Activated CD4-positive, alpha-beta memory T cell treated with anti-CD3 and anti-CD28 coated beads for 36 hours (primary cell): ENCODE measurements at regions of chr1 and their contacts with region 1.

Region 1: GRCh38 chr1:45359882-45360513 is 19.8 kb upstream of the MUTYH start:
- DNase-seq: peak; percentile 68
- H3K4me3 Mint-ChIP-seq: no peak overlapping the region
- H3K27ac Mint-ChIP-seq: no peak overlapping the region
- H3K4me1 Mint-ChIP-seq: peaks cover 9% of the 10 kb centered on the region
- H3K27me3 Mint-ChIP-seq: no peaks in the 10 kb centered on the region

Region 2: GRCh38 chr1:45339789-45340570 is 20.0 kb before region 1 on chr1 and contains the starts of genes MUTYH and TOE1:
- CTCF ChIA-PET with region 1: interaction called, 7 read pairs
- POLR2A ChIA-PET with region 1: interaction called, 3 read pairs
- intact Hi-C with region 1: loop called (anchors 1 kb)
- DNase-seq: peak; percentile 97
- H3K4me3 Mint-ChIP-seq: peak within 1 kb of the TSS; percentile 93
- H3K27ac Mint-ChIP-seq: peak within 1 kb of the TSS; percentile 98
- H3K4me1 Mint-ChIP-seq: peaks cover 34% of the 10 kb centered on the region
- H3K27me3 Mint-ChIP-seq: no peaks in the 10 kb centered on the region
- total RNA-seq, gene MUTYH: 49.2 to 51.8 TPM
- total RNA-seq, gene TOE1: 22.8 to 23.1 TPM

Region 3: DNA sequence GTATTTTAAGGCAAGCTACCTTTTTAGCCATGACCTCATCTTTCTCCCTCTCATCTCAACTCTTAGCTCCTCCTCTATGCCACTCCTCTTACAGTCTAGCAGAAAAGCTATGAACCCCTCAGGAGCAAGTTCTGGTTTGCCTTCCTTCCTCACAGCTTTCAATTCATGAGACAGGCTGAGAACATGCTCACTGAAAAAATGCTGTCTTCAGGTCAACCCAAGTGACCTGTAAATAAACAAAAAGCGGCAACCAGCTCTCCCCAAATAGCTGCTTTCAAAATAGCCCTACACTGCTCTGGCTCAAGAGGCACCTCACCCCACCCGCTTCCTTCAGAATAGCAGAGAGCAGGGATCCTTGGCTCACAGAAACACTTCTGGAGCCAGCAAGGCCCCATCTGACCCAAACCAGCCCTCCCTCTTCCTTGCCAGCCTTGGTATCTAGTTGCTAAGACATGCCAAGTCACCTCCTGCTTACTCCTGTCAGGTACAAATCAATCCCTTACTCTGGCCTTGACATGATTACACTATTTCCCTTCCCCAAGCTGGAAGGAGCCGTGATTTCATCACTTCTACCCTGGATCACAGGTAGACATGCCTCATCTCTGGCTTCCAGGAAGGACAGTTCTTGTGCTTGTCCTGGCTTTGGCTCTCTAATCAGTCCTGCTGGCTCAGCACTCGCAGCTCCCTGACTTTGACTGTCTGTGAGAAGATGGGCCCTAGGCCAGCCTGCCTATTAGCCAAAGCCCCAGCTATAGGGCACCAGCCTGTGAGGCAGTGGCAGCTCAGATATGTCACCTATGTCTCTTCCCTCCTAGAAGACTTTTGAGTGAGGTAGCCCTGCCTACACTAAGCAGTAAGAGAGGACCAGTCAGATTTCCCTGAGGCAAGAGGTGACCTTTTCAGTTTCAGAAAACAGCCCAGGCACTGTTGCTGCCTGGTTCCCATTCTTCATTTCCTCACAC is 11.0 kb before region 1 on chr1:
- CTCF ChIA-PET with region 1: interaction called, 15 read pairs
- POLR2A ChIA-PET with region 1: no interaction called
- intact Hi-C with region 1: no loop called
- DNase-seq: no peak
- H3K4me3 Mint-ChIP-seq: no peak overlapping the region
- H3K27ac Mint-ChIP-seq: no peak overlapping the region
- H3K4me1 Mint-ChIP-seq: peaks cover 7% of the 10 kb centered on the region
- H3K27me3 Mint-ChIP-seq: no peaks in the 10 kb centered on the region